A549 (cell line): ENCODE measurements at regions of chr16 and their contacts with region 1.

Region 1: GRCh38 chr16:86072328-86073102 is 173.6 kb downstream of the IRF8 start:
- DNase-seq: peak; percentile 64 to 70
- ATAC-seq: peak in 1 of 2 experiments; percentile 86; a peak in 4 of 6 replicates
- H3K4me3 ChIP-seq: no peak overlapping the region
- H3K27ac ChIP-seq: no peak overlapping the region
- H3K4me1 ChIP-seq: no peaks in the 10 kb centered on the region
- CTCF ChIP-seq: peak; percentile 85
- EP300 ChIP-seq: no peak
- POLR2A ChIP-seq: no peak
- RAD21 ChIP-seq: peak; percentile 75 to 82

Region 2: DNA sequence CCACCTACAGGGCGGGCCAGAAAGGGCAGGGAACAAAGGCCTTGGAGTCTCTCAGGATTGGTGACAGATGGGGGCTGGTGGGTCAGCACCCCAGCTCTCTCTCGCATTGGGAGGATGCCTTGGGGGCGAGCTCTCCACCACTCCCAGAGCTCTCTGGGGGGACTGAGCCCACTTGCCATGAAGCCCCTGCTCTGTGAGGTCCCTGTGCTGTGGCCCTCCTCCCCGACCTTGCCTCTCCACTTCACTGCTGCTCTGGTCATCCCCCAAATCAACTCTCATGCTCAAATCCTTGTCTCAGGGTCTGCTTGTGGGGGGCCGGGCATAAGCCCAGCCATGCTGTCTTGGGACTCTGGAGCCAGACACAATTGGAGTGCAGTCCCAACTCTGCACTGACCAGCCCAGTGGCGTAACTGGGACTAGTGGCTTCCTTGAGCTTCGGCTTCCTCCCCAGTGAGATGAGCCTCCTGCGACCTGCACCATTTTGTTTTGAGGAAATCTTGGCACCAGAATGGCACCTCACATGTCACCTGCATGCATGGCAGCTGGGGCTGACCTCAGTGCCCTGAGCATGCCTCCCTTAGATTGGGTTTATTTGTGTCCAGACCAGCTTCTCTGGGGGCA is 11.0 kb after region 1 on chr16:
- CTCF ChIA-PET with region 1: interaction called, 23 read pairs
- POLR2A ChIA-PET with region 1: no interaction called
- DNase-seq: no peak
- ATAC-seq: peak in 1 of 2 experiments; percentile 55; a peak in 3 of 6 replicates
- H3K4me3 ChIP-seq: no peak overlapping the region
- H3K27ac ChIP-seq: no peak overlapping the region
- H3K4me1 ChIP-seq: no peaks in the 10 kb centered on the region
- CTCF ChIP-seq: no peak
- EP300 ChIP-seq: no peak
- POLR2A ChIP-seq: no peak
- RAD21 ChIP-seq: no peak

Region 3: DNA sequence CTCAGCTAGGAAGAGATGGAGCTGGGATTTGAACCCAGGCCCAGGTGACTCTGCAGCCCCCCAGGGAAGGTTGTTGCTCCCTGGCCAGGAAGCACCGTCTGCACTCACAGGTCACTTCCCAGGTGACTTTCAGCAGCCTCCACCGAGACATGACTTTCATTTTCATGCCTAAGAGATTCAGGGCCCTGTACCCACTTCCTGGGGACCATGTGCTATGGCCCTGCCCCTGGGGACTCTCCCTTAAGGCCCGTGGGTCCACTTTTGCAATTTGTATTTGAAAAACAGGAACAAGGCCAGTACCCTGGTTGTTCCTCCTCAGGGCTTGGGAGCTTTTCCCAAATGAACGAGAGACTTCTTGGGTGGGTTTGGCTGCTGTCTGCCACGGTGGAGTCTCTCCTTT is 17.5 kb after region 1 on chr16:
- CTCF ChIA-PET with region 1: interaction called, 11 read pairs
- POLR2A ChIA-PET with region 1: no interaction called
- DNase-seq: no peak
- ATAC-seq: no peak
- H3K4me3 ChIP-seq: no peak overlapping the region
- H3K27ac ChIP-seq: no peak overlapping the region
- H3K4me1 ChIP-seq: no peaks in the 10 kb centered on the region
- CTCF ChIP-seq: no peak
- EP300 ChIP-seq: no peak
- POLR2A ChIP-seq: no peak
- RAD21 ChIP-seq: no peak

Region 4: DNA sequence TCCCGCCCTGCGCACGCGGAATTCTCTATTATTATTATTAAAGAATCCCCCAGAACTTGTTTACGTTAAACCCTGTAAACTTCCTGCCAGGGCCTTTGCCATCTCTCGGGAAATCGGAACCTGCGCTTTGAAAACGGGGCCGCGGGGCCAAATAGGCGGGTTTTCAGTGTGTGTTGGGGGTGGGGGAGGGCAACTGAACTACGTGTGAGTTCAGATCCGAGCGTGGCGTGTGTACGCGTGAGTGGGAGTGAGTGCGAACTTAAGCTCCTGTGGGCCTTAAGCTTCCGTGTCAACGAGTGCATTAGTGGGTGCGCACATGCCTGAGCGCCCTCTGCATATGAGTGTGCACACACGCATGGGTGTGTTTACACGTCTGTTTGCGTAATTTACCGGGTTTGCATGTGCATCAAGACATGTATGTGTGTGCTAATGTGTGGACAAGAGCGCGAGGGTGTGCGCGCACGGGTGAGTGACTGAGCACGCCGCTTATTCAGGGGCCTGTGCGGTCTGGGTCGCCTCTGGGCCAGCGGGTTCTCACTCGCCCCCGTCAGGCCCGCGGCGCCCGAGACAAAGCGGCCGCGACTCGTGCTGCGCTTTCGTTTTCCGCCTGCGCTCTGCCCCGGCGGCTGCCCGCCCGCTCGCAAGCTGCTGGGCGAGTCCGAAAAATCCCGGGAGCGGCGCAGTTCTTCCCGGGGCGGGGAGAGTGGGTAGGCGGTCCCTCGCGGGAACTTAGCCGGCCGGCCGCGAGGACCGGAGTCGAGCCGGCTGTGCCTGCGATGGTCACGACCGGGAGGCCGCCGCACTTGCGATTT is 436.6 kb after region 1 on chr16:
- CTCF ChIA-PET with region 1: interaction called, 10 read pairs
- POLR2A ChIA-PET with region 1: no interaction called
- DNase-seq: peak in 1 of 2 experiments; percentile 41
- ATAC-seq: peak in 1 of 2 experiments; percentile 40; a peak in 3 of 6 replicates
- H3K4me3 ChIP-seq: peak overlapping the region; percentile 46
- H3K27ac ChIP-seq: no peak overlapping the region; a peak in 1 of 6 replicates
- H3K4me1 ChIP-seq: peaks cover 19% of the 10 kb centered on the region
- CTCF ChIP-seq: no peak
- EP300 ChIP-seq: no peak
- POLR2A ChIP-seq: no peak
- RAD21 ChIP-seq: no peak